GM23248 (cell line): ENCODE measurements at regions of chr1 and their contacts with region 1.

Region 1: DNA sequence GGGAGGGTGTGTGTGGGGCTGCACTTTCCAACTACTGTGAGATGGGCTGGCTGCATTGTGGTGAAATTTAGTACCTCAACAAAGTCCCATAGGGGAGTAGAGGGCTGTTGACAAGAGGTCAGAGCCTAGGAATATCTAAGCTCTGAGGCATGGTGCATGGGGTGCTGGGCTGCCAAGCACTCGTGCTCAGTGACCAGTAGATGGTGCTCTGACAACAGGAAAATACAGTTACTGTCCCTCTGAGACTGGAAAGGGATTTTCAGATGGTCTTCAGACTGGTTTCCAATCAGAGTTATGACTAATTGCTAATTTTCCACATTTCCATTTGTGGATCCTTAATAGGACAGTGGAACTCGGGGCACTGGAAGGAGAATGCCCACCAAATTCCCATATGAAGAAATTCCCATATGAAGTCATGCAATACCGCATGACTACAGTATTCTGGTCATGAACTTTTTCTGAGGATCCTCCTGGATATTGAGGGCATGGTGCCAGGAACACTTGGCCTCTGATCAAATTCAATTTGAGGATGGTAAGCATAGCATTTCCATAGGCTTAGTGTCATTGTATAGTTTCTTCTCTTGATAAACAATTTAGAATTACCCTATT is 4.1 kb upstream of the CACNA1E start:
- DNase-seq: peak; percentile 79
- H3K4me3 ChIP-seq: no peak overlapping the region
- H3K27ac ChIP-seq: no peak overlapping the region
- H3K4me1 ChIP-seq: no peaks in the 10 kb centered on the region
- H3K27me3 ChIP-seq: peaks cover 48% of the 10 kb centered on the region

Region 2: GRCh38 chr1:182069028-182069466 is 589.8 kb after region 1 on chr1:
- in situ Hi-C with region 1: loop called (anchors 10 kb)
- DNase-seq: peak; percentile 66
- H3K4me3 ChIP-seq: no peak overlapping the region
- H3K27ac ChIP-seq: no peak overlapping the region
- H3K4me1 ChIP-seq: no peaks in the 10 kb centered on the region
- H3K27me3 ChIP-seq: no peaks in the 10 kb centered on the region; the same call in 1 of the 2 replicates

Region 3: GRCh38 chr1:182404781-182405180 is 925.5 kb after region 1 on chr1:
- in situ Hi-C with region 1: loop called (anchors 25 kb)
- DNase-seq: no peak
- H3K4me3 ChIP-seq: no peak overlapping the region
- H3K27ac ChIP-seq: no peak overlapping the region
- H3K4me1 ChIP-seq: no peaks in the 10 kb centered on the region
- H3K27me3 ChIP-seq: no peaks in the 10 kb centered on the region